ENCODE measurements at regions of chr6 and their contacts with region 1.

Region 1: DNA sequence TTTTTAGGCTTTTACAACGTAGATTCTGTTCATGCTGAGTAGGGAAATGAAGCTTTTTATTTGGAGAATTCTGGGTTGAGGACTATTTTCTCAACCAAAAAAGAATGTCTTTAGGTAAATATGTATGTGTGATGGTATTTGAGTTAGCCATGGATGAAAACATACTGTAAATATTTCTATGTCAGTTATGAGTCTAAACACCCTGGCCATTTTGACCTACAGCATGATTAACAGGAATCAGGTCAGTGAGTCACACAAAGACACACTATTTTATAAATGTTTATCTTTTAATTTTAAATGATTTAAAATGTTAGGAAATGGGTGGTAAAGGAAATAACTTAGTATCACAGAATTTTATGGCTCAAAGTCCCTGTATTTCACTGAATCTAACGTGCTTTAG is 851.7 kb upstream of the MAP3K7 start:
- DNase-seq: peak; percentile 72
- ATAC-seq: peak; percentile 83
- H3K4me3 ChIP-seq: peak overlapping the region; percentile 16; the same call in 1 of the 2 replicates
- H3K27ac ChIP-seq: peak overlapping the region; percentile 67
- H3K4me1 ChIP-seq: peaks cover 47% of the 10 kb centered on the region
- H3K27me3 ChIP-seq: no peaks in the 10 kb centered on the region
- CTCF ChIP-seq: no peak

Region 2: DNA sequence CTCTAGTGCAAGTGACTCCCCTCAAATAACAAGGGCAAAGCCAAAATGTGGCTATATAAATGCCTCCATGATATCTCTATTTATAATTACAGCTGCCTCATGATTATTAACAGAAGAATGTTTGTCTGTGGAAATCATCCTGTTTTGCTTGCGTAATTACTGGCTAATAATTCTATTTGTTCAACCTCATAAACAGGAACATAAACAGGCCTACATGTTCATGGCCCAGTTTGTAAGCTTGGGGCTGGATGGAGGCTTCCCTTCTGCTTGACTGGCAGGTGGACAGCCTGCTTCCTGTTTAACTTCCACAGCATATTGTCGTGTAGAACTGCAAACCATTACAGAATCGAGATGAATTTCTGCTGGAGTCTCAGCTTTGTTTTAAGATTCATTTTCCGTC is 85.7 kb before region 1 on chr6:
- CTCF ChIA-PET with region 1: no interaction called
- POLR2A ChIA-PET with region 1: no interaction called
- intact Hi-C with region 1: loop called (anchors 2 kb)
- DNase-seq: peak; percentile 2
- ATAC-seq: peak; percentile 58; the same call in 1 of the 2 replicates
- H3K4me3 ChIP-seq: no peak overlapping the region
- H3K27ac ChIP-seq: no peak overlapping the region
- H3K4me1 ChIP-seq: no peaks in the 10 kb centered on the region
- H3K27me3 ChIP-seq: no peaks in the 10 kb centered on the region
- CTCF ChIP-seq: no peak

Region 3: GRCh38 chr6:91387290-91388062 is 51.1 kb before region 1 on chr6:
- CTCF ChIA-PET with region 1: no interaction called
- POLR2A ChIA-PET with region 1: no interaction called
- intact Hi-C with region 1: no loop called
- DNase-seq: no peak
- ATAC-seq: no peak
- H3K4me3 ChIP-seq: no peak overlapping the region
- H3K27ac ChIP-seq: no peak overlapping the region
- H3K4me1 ChIP-seq: no peaks in the 10 kb centered on the region
- H3K27me3 ChIP-seq: no peaks in the 10 kb centered on the region
- CTCF ChIP-seq: no peak

Region 4: GRCh38 chr6:91490672-91491301 is 52.2 kb after region 1 on chr6:
- CTCF ChIA-PET with region 1: no interaction called
- POLR2A ChIA-PET with region 1: interaction called, 15 read pairs
- intact Hi-C with region 1: no loop called
- DNase-seq: no peak
- ATAC-seq: no peak
- H3K4me3 ChIP-seq: no peak overlapping the region
- H3K27ac ChIP-seq: no peak overlapping the region
- H3K4me1 ChIP-seq: no peaks in the 10 kb centered on the region
- H3K27me3 ChIP-seq: no peaks in the 10 kb centered on the region
- CTCF ChIP-seq: no peak

Region 5: GRCh38 chr6:91506551-91506950 is 68.0 kb after region 1 on chr6:
- CTCF ChIA-PET with region 1: no interaction called
- POLR2A ChIA-PET with region 1: no interaction called
- intact Hi-C with region 1: loop called (anchors 1 kb)
- DNase-seq: peak; percentile 73
- ATAC-seq: peak; percentile 84
- H3K4me3 ChIP-seq: no peak overlapping the region
- H3K27ac ChIP-seq: 0 out of 2 replicates have a peak overlapping the region, but pooled peaks have one; percentile 29
- H3K4me1 ChIP-seq: peaks cover 17% of the 10 kb centered on the region
- H3K27me3 ChIP-seq: no peaks in the 10 kb centered on the region
- CTCF ChIP-seq: no peak

Region 6: GRCh38 chr6:91575032-91575431 is 136.5 kb after region 1 on chr6:
- CTCF ChIA-PET with region 1: no interaction called
- POLR2A ChIA-PET with region 1: no interaction called
- intact Hi-C with region 1: loop called (anchors 10 kb)
- DNase-seq: peak; percentile 21
- ATAC-seq: no peak
- H3K4me3 ChIP-seq: no peak overlapping the region
- H3K27ac ChIP-seq: no peak overlapping the region
- H3K4me1 ChIP-seq: no peaks in the 10 kb centered on the region
- H3K27me3 ChIP-seq: no peaks in the 10 kb centered on the region
- CTCF ChIP-seq: no peak

Region 7: DNA sequence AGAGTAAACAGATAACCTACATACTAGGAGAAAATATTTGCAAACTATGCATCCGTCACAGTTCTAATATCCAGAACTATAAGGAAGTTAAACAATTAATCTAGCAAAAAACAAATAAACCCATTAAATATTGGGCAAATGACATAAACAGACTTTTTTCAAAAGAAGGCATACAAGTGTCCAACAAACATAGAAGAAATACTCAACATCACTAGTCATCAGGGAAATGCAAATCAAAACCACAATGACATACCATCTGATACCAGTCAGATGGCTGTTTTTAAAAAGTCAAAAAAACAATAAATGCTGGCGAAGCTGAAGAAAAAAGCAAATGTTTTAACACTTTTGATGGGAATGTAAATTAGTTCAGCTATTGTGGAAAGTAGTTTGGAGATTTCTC is 266.0 kb after region 1 on chr6:
- CTCF ChIA-PET with region 1: no interaction called
- POLR2A ChIA-PET with region 1: no interaction called
- intact Hi-C with region 1: loop called (anchors 2 kb)
- DNase-seq: peak; percentile 65
- ATAC-seq: peak; percentile 90
- H3K4me3 ChIP-seq: no peak overlapping the region
- H3K27ac ChIP-seq: peak overlapping the region; percentile 27
- H3K4me1 ChIP-seq: peaks cover 30% of the 10 kb centered on the region
- H3K27me3 ChIP-seq: no peaks in the 10 kb centered on the region
- CTCF ChIP-seq: no peak